MCF 10A (cell line): ENCODE measurements at regions of chr6 and their contacts with region 1.

Region 1: GRCh38 chr6:159693128-159693893 is at the start of gene SOD2:
- DNase-seq: peak; percentile 91
- H3K4me3 Mint-ChIP-seq: peak within 1 kb of the TSS; percentile 77
- H3K27ac Mint-ChIP-seq: peak within 1 kb of the TSS; percentile 97
- H3K4me1 Mint-ChIP-seq: peaks cover 34% of the 10 kb centered on the region
- H3K27me3 Mint-ChIP-seq: no peaks in the 10 kb centered on the region
- CTCF ChIP-seq: no peak
- total RNA-seq, gene SOD2: 424 and 600 TPM in 2 replicates

Region 2: DNA sequence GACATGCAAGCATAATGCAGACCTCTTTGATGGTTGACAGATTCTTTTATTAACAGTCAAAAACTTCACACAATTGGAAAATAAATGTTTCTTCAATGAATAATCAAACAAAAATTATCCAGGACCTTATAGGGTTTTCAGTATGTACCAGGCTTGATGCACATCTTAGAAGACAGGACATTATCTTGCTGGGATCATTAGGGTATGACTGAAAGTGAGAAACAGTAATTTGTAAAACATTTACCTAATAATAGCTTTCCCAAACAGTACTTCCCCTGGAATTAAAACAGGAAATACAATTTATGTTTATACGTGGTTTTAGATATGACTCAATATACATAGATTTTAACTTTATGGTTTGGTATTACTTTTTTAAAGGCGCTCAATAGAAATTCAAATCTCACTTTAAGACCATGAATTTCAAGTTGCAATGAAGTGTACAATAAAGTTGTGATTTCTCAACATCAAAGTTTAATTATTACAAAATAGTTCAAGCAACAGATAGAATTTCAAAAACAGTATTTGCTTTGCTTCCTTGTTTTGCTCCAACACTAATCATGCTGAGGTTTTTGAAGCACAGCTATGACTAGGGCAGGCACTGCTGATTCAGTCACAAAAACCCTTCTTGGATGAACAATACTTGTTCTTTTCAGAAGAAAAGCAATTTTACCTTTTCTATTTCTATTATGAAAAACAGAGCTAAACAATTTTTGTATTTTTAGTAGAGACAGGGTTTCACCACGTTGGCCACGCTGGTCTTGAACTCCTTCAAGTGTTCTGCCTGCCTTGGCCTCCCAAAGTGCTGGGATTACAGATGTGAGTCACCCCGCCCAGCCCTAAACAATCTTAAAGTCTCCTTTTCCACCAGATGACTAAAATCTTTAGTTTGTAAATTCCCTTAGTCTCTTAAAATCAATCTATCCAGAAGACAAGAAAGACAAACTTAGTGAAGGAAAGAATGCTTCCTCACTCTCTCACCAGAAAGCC is 13.9 kb before region 1 on chr6:
- CTCF ChIA-PET with region 1: interaction called, 3 read pairs
- POLR2A ChIA-PET with region 1: interaction called, 37 read pairs
- intact Hi-C with region 1: no loop called
- DNase-seq: no peak
- H3K4me3 Mint-ChIP-seq: peak overlapping the region; percentile 41
- H3K27ac Mint-ChIP-seq: peak overlapping the region; percentile 27
- H3K4me1 Mint-ChIP-seq: peaks cover 9% of the 10 kb centered on the region
- H3K27me3 Mint-ChIP-seq: no peaks in the 10 kb centered on the region
- CTCF ChIP-seq: no peak

Region 3: DNA sequence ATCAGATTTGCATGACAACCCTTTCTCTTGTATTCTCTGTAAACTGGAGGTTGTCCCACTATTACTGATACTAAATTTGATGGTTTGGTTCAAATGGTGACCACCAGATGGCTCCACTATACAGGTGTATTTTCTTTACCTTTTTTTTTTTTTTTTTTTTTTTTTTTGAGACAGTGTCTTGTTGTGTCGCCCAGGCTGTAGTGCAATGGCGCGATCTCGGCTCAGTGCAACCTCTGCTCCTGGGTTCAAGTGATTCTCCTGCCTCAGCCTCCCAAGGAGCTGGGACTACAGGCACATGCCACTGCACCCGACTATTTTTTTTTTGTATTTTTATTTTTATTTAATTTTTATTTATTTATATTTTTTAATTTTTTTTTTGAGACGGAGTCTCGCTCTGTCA is 27.4 kb after region 1 on chr6:
- CTCF ChIA-PET with region 1: interaction called, 13 read pairs
- POLR2A ChIA-PET with region 1: interaction called, 877 read pairs
- intact Hi-C with region 1: no loop called
- DNase-seq: peak; percentile 72
- H3K4me3 Mint-ChIP-seq: no peak overlapping the region
- H3K27ac Mint-ChIP-seq: no peak overlapping the region
- H3K4me1 Mint-ChIP-seq: peaks cover 42% of the 10 kb centered on the region
- H3K27me3 Mint-ChIP-seq: no peaks in the 10 kb centered on the region
- CTCF ChIP-seq: peak; percentile 40

Region 4: DNA sequence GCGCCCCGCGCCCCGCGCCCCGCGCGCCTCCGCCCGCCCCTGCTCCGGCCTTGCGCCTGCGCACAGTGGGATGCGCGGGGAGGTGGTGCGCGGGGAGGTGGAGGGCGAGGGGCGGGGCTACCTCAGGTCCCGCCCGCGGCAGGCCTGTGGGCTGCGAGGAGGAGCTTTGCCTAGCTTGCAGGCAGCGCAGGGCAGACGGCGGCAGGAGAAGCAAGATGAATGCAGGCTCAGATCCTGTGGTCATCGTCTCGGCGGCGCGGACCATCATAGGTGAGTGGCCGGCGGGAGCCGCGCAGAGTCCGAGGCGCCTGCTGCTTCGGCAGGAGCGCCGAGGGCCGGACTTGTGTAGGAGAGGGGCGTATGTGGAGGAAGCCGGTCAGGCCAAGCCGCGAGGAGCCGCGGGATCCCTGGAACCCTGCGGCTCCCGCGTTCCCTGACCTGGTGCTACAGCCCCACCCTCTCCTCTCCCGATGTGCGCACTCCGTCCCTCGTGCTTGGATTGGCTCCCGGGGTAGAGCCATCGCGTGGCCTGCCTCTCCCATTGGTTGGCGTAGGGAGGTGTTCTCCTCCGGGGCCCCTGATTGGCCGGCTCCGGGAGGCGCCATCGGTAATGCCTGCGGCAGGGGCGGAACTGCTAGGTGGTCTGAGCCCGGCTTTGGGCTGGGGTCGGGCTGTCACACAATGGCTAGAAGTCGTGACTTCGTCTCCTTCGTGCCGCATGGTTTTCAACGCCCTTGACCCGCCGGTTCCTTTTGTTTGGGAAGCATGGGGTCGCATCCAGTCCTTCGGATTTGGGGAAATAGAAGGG is 68.8 kb after region 1 on chr6 and contains the start of gene ACAT2:
- CTCF ChIA-PET with region 1: interaction called, 6 read pairs
- POLR2A ChIA-PET with region 1: interaction called, 11 read pairs
- intact Hi-C with region 1: loop called (anchors 2 kb)
- DNase-seq: peak; percentile 96
- H3K4me3 Mint-ChIP-seq: peak within 1 kb of the TSS; percentile 88
- H3K27ac Mint-ChIP-seq: peak within 1 kb of the TSS; percentile 82
- H3K4me1 Mint-ChIP-seq: peaks cover 28% of the 10 kb centered on the region
- H3K27me3 Mint-ChIP-seq: no peaks in the 10 kb centered on the region
- CTCF ChIP-seq: no peak
- total RNA-seq, gene ACAT2: 13.4 and 46.0 TPM in 2 replicates

Region 5: GRCh38 chr6:159852877-159853276 is 159.6 kb after region 1 on chr6:
- CTCF ChIA-PET with region 1: interaction called, 23 read pairs
- POLR2A ChIA-PET with region 1: interaction called, 4 read pairs
- intact Hi-C with region 1: loop called (anchors 1 kb)
- DNase-seq: peak; percentile 41
- H3K4me3 Mint-ChIP-seq: no peak overlapping the region
- H3K27ac Mint-ChIP-seq: no peak overlapping the region
- H3K4me1 Mint-ChIP-seq: no peaks in the 10 kb centered on the region
- H3K27me3 Mint-ChIP-seq: no peaks in the 10 kb centered on the region
- CTCF ChIP-seq: peak; percentile 28

Region 6: GRCh38 chr6:159941286-159942113 is 248.2 kb after region 1 on chr6:
- CTCF ChIA-PET with region 1: interaction called, 6 read pairs
- POLR2A ChIA-PET with region 1: no interaction called
- intact Hi-C with region 1: loop called (anchors 1 kb)
- DNase-seq: peak; percentile 58
- H3K4me3 Mint-ChIP-seq: no peak overlapping the region
- H3K27ac Mint-ChIP-seq: no peak overlapping the region
- H3K4me1 Mint-ChIP-seq: peaks cover 13% of the 10 kb centered on the region
- H3K27me3 Mint-ChIP-seq: no peaks in the 10 kb centered on the region
- CTCF ChIP-seq: peak; percentile 51

Region 7: GRCh38 chr6:160041608-160042007 is 348.3 kb after region 1 on chr6:
- CTCF ChIA-PET with region 1: interaction called, 3 read pairs
- POLR2A ChIA-PET with region 1: interaction called, 3 read pairs
- intact Hi-C with region 1: loop called (anchors 2 kb)
- DNase-seq: peak; percentile 97
- H3K4me3 Mint-ChIP-seq: peak overlapping the region; percentile 77
- H3K27ac Mint-ChIP-seq: peak overlapping the region; percentile 66
- H3K4me1 Mint-ChIP-seq: peaks cover 58% of the 10 kb centered on the region
- H3K27me3 Mint-ChIP-seq: no peaks in the 10 kb centered on the region
- CTCF ChIP-seq: peak; percentile 34